ENCODE measurements at regions of chr9 and their contacts with region 1.

Region 1: DNA sequence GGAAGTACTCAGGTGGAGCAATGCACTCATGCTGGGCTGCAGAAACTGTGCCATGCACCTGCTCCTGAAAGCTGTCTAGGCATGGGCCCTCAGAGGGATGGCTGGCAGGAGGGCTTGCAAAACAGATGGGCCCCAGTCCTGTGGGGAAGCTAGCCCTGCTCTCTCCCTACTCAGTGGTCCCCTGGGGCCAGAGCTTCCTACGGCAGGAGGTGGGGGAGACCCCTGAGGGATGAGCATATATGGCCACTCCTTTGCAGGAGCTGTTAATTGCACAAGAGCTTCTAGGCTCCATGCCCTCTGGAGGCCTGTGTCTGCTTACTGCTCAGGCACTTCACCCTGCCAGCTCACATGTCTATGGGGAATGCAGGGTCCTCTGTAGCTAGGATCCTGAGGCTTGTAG is 545.3 kb upstream of the PTPRD start:
- DNase-seq: no peak
- ATAC-seq: no peak
- H3K4me3 ChIP-seq: no peak overlapping the region
- H3K4me3 Mint-ChIP-seq: no peak overlapping the region
- H3K27ac ChIP-seq: no peak overlapping the region
- H3K27ac Mint-ChIP-seq: no peak overlapping the region
- H3K4me1 ChIP-seq: no peaks in the 10 kb centered on the region
- H3K4me1 Mint-ChIP-seq: no peaks in the 10 kb centered on the region
- H3K27me3 ChIP-seq: no peaks in the 10 kb centered on the region
- H3K27me3 Mint-ChIP-seq: no peaks in the 10 kb centered on the region

Region 2: GRCh38 chr9:11135851-11136250 is 22.2 kb before region 1 on chr9:
- CTCF ChIA-PET with region 1: no interaction called
- POLR2A ChIA-PET with region 1: no interaction called
- intact Hi-C with region 1: no loop called
- DNase-seq: no peak
- ATAC-seq: no peak
- H3K4me3 ChIP-seq: no peak overlapping the region
- H3K4me3 Mint-ChIP-seq: no peak overlapping the region
- H3K27ac ChIP-seq: no peak overlapping the region
- H3K27ac Mint-ChIP-seq: no peak overlapping the region
- H3K4me1 ChIP-seq: no peaks in the 10 kb centered on the region
- H3K4me1 Mint-ChIP-seq: no peaks in the 10 kb centered on the region
- H3K27me3 ChIP-seq: no peaks in the 10 kb centered on the region
- H3K27me3 Mint-ChIP-seq: no peaks in the 10 kb centered on the region

Region 3: DNA sequence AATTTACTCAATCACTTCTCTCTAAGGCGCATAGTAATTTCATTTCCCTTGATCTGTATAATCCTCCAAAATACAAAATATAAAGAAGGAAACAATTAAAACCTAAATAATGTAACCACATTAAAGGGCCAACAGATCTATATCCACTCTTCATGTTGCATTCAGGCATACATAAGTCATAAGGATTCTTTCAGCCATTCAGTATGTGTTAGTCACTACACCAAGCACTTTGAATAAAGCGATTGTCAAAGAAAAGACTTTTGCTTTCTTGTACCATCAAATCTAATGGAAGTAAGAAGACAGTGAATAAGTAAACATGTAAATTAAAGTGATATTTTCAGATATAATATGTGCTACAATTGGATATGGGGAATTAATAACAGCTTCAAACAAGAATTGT is 23.9 kb after region 1 on chr9:
- CTCF ChIA-PET with region 1: no interaction called
- POLR2A ChIA-PET with region 1: no interaction called
- intact Hi-C with region 1: no loop called
- DNase-seq: no peak
- ATAC-seq: no peak
- H3K4me3 ChIP-seq: no peak overlapping the region
- H3K4me3 Mint-ChIP-seq: no peak overlapping the region
- H3K27ac ChIP-seq: no peak overlapping the region
- H3K27ac Mint-ChIP-seq: no peak overlapping the region
- H3K4me1 ChIP-seq: no peaks in the 10 kb centered on the region
- H3K4me1 Mint-ChIP-seq: no peaks in the 10 kb centered on the region
- H3K27me3 ChIP-seq: no peaks in the 10 kb centered on the region
- H3K27me3 Mint-ChIP-seq: no peaks in the 10 kb centered on the region

Region 4: GRCh38 chr9:11676821-11677220 is 518.8 kb after region 1 on chr9:
- CTCF ChIA-PET with region 1: no interaction called
- POLR2A ChIA-PET with region 1: no interaction called
- intact Hi-C with region 1: loop called in 1 of 2 experiments (anchors 10 kb)
- DNase-seq: no peak
- ATAC-seq: no peak
- H3K4me3 ChIP-seq: no peak overlapping the region
- H3K4me3 Mint-ChIP-seq: no peak overlapping the region
- H3K27ac ChIP-seq: no peak overlapping the region
- H3K27ac Mint-ChIP-seq: no peak overlapping the region
- H3K4me1 ChIP-seq: no peaks in the 10 kb centered on the region
- H3K4me1 Mint-ChIP-seq: no peaks in the 10 kb centered on the region
- H3K27me3 ChIP-seq: no peaks in the 10 kb centered on the region
- H3K27me3 Mint-ChIP-seq: no peaks in the 10 kb centered on the region

Measured in naive thymus-derived CD4-positive, alpha-beta T cell (primary cell).